ENCODE measurements at regions of chr11 and their contacts with region 1.

Region 1: GRCh38 chr11:108117746-108118371 is 3.5 kb upstream of the ACAT1 start:
- DNase-seq: peak; percentile 44
- H3K4me3 ChIP-seq: no peak overlapping the region; a peak in 1 of 4 replicates
- H3K27ac ChIP-seq: no peak overlapping the region
- H3K4me1 ChIP-seq: peaks cover 0 to 5% of the 10 kb centered on the region in 2 experiments; a peak in 2 of 4 replicates
- H3K27me3 ChIP-seq: no peaks in the 10 kb centered on the region
- CTCF ChIP-seq: peak; percentile 78
- EP300 ChIP-seq: no peak
- RAD21 ChIP-seq: peak; percentile 78

Region 2: GRCh38 chr11:108101090-108101775 is 16.6 kb before region 1 on chr11:
- CTCF ChIA-PET with region 1: interaction called, 10 read pairs
- POLR2A ChIA-PET with region 1: no interaction called
- DNase-seq: no peak
- H3K4me3 ChIP-seq: no peak overlapping the region
- H3K27ac ChIP-seq: no peak overlapping the region
- H3K4me1 ChIP-seq: no peaks in the 10 kb centered on the region
- H3K27me3 ChIP-seq: no peaks in the 10 kb centered on the region
- CTCF ChIP-seq: no peak
- EP300 ChIP-seq: no peak
- RAD21 ChIP-seq: no peak

Region 3: GRCh38 chr11:108647701-108648527 is 530.1 kb after region 1 on chr11:
- CTCF ChIA-PET with region 1: interaction called, 30 read pairs
- POLR2A ChIA-PET with region 1: no interaction called
- DNase-seq: peak; percentile 54
- H3K4me3 ChIP-seq: no peak overlapping the region; a peak in 1 of 4 replicates
- H3K27ac ChIP-seq: no peak overlapping the region
- H3K4me1 ChIP-seq: no peaks in the 10 kb centered on the region
- H3K27me3 ChIP-seq: no peaks in the 10 kb centered on the region
- CTCF ChIP-seq: peak; percentile 85
- EP300 ChIP-seq: no peak
- RAD21 ChIP-seq: peak; percentile 99

Measured in SK-N-SH (cell line).